HepG2 (cell line): ENCODE measurements at regions of chr2 and their contacts with region 1.

Region 1: GRCh38 chr2:206693399-206694137 is 24.6 kb downstream of the DYTN start:
- DNase-seq: peak; percentile 65
- ATAC-seq: peak; percentile 93
- H3K4me3 ChIP-seq: no peak overlapping the region
- H3K27ac ChIP-seq: no peak overlapping the region
- H3K4me1 ChIP-seq: no peaks in the 10 kb centered on the region
- H3K27me3 ChIP-seq: peaks cover 0 to 7% of the 10 kb centered on the region in 2 experiments; a peak in 2 of 5 replicates
- CTCF ChIP-seq: peak; percentile 88
- EP300 ChIP-seq: no peak
- POLR2A ChIP-seq: no peak
- RAD21 ChIP-seq: peak; percentile 55; the same call in 1 of the 2 replicates

Region 2: GRCh38 chr2:206721256-206721920 is 27.8 kb after region 1 on chr2:
- CTCF ChIA-PET with region 1: no interaction called
- POLR2A ChIA-PET with region 1: no interaction called
- in situ Hi-C with region 1: no loop called
- intact Hi-C with region 1: no loop called
- DNase-seq: no peak
- ATAC-seq: no peak
- H3K4me3 ChIP-seq: no peak overlapping the region
- H3K27ac ChIP-seq: no peak overlapping the region
- H3K4me1 ChIP-seq: no peaks in the 10 kb centered on the region
- H3K27me3 ChIP-seq: no peaks in the 10 kb centered on the region
- CTCF ChIP-seq: no peak
- EP300 ChIP-seq: no peak
- POLR2A ChIP-seq: no peak
- RAD21 ChIP-seq: no peak

Region 3: GRCh38 chr2:206784559-206785353 is 91.2 kb after region 1 on chr2:
- CTCF ChIA-PET with region 1: interaction called, 13 read pairs
- POLR2A ChIA-PET with region 1: no interaction called
- in situ Hi-C with region 1: loop called (anchors 5 kb)
- intact Hi-C with region 1: loop called (anchors 1 kb)
- DNase-seq: no peak
- ATAC-seq: no peak
- H3K4me3 ChIP-seq: no peak overlapping the region
- H3K27ac ChIP-seq: no peak overlapping the region
- H3K4me1 ChIP-seq: no peaks in the 10 kb centered on the region
- H3K27me3 ChIP-seq: no peaks in the 10 kb centered on the region
- CTCF ChIP-seq: no peak
- EP300 ChIP-seq: no peak
- POLR2A ChIP-seq: no peak
- RAD21 ChIP-seq: no peak

Region 4: DNA sequence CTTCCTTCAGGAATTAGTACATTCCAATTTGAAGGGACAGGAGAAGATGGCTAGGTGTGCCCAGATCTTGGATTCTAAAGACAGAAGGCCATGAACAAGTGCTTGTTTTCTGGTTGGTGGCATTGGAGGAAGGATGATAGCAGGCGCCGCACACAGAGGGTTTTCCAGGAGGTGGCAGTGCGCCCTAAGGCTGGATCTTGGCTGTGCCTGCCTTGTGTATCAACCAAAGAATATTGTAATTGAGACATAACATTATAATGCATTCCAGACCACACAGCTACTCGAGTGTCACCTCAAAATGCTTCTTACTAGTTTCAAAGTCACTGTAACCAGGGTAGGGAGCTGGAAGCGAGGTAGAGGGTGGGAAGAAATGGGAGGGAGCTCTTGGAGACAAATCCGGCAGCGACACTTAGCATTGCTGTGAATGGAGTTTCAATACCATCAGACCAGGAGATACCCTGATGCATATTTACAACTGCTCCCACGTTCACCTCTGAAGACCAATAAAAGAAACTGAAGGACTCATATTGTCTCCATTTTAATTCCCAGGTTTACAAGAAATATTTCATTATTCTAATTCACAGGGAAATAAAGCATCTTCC is 288.3 kb after region 1 on chr2:
- CTCF ChIA-PET with region 1: no interaction called
- POLR2A ChIA-PET with region 1: no interaction called
- in situ Hi-C with region 1: loop called (anchors 10 kb)
- intact Hi-C with region 1: no loop called
- DNase-seq: no peak
- ATAC-seq: peak; percentile 86
- H3K4me3 ChIP-seq: no peak overlapping the region
- H3K27ac ChIP-seq: no peak overlapping the region
- H3K4me1 ChIP-seq: no peaks in the 10 kb centered on the region
- H3K27me3 ChIP-seq: peaks cover 0 to 6% of the 10 kb centered on the region in 2 experiments; a peak in 1 of 5 replicates
- CTCF ChIP-seq: peak; percentile 67
- EP300 ChIP-seq: no peak
- POLR2A ChIP-seq: no peak
- RAD21 ChIP-seq: peak; percentile 61

Region 5: GRCh38 chr2:206989306-206989705 is 295.7 kb after region 1 on chr2:
- CTCF ChIA-PET with region 1: interaction called, 10 read pairs
- POLR2A ChIA-PET with region 1: no interaction called
- in situ Hi-C with region 1: loop called (anchors 10 kb)
- intact Hi-C with region 1: loop called (anchors 1 kb)
- DNase-seq: peak; percentile 49
- ATAC-seq: peak; percentile 100
- H3K4me3 ChIP-seq: no peak overlapping the region
- H3K27ac ChIP-seq: no peak overlapping the region
- H3K4me1 ChIP-seq: no peaks in the 10 kb centered on the region
- H3K27me3 ChIP-seq: no peaks in the 10 kb centered on the region
- CTCF ChIP-seq: peak; percentile 89
- EP300 ChIP-seq: no peak
- POLR2A ChIP-seq: no peak
- RAD21 ChIP-seq: peak; percentile 70